HEK293 (cell line): ENCODE measurements at regions of chr11 and their contacts with region 1.

Region 1: DNA sequence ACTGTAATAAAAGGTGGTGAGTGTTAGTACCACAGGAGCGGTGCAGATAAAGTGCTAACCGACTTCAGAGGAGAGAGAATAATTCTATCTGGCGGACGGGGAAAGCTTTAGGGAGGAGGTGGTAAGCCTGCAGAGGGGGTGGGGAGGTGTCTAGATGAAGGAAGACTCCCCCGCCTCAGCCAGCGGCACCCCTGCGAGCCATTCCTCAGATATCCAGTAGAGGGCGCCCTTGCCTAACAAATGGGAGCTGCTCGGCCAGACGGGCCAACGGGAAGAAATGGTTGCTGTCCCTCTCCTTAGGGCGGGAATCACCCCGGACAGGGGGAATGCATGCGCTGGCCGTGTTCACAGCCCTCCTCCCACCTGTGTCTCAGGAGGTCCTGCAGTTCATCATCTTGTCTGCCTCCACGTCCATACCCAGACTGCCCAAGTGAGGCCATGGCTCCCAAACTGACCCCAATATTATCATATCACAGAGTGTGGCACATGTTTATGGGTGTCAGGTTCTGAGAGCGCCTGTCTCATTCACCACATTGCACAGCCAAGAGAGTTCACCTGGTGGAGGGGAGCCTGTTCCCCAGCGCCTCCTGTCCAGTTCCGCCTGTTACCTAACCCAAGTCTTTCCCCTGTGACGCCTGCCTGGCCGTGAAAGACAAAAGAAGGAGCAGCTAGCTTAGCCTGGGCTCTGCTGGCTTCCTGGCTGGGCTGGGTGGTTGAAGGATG is 85.5 kb downstream of the ST3GAL4 start:
- H3K4me3 ChIP-seq: no peak overlapping the region
- H3K27ac ChIP-seq: no peak overlapping the region
- H3K4me1 ChIP-seq: no peaks in the 10 kb centered on the region
- CTCF ChIP-seq: peak; percentile 71

Region 2: DNA sequence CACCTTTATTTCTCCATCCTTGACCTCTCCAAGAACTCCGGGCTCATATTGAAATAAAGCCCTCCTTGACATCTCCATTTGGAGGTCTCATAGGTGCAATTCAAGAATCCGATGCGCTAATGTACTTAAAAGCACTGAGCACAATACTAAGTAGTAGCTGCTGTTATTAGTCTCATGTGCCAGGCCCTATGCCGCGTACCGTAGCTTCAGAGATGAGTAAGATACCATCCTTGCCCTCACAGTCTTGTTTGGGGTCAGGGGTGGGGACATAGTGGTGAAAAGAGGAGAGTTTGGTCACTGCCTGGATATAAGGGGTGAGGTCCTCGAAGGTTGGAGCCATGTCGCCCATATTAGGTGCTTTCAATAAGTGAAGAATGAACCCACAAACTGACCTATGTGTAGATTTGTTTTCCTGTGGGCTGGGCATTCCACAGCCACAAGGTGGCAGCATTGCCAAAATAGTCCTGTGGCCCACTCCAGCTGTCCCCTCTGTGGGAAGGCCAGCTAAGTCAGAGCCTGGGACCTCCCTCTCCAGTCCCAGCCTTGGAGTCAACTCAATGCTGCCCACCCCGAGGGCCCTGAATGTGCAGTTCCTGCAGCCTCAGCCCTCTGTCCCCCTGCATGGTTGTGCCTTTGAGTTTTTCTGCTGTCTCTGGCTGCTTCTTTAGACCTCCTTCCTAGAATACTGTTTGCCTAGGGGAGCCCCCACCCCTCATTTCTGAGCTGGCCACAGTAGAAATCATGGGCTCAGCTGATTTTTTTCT is 130.5 kb before region 1 on chr11:
- CTCF ChIA-PET with region 1: interaction called, 13 read pairs
- POLR2A ChIA-PET with region 1: no interaction called
- H3K4me3 ChIP-seq: no peak overlapping the region
- H3K27ac ChIP-seq: no peak overlapping the region
- H3K4me1 ChIP-seq: no peaks in the 10 kb centered on the region
- CTCF ChIP-seq: peak; percentile 49; the same call in 1 of the 2 replicates

Region 3: GRCh38 chr11:126405906-126406305 is 35.0 kb before region 1 on chr11:
- CTCF ChIA-PET with region 1: no interaction called
- POLR2A ChIA-PET with region 1: no interaction called
- H3K4me3 ChIP-seq: no peak overlapping the region
- H3K27ac ChIP-seq: no peak overlapping the region
- H3K4me1 ChIP-seq: no peaks in the 10 kb centered on the region
- CTCF ChIP-seq: no peak

Region 4: DNA sequence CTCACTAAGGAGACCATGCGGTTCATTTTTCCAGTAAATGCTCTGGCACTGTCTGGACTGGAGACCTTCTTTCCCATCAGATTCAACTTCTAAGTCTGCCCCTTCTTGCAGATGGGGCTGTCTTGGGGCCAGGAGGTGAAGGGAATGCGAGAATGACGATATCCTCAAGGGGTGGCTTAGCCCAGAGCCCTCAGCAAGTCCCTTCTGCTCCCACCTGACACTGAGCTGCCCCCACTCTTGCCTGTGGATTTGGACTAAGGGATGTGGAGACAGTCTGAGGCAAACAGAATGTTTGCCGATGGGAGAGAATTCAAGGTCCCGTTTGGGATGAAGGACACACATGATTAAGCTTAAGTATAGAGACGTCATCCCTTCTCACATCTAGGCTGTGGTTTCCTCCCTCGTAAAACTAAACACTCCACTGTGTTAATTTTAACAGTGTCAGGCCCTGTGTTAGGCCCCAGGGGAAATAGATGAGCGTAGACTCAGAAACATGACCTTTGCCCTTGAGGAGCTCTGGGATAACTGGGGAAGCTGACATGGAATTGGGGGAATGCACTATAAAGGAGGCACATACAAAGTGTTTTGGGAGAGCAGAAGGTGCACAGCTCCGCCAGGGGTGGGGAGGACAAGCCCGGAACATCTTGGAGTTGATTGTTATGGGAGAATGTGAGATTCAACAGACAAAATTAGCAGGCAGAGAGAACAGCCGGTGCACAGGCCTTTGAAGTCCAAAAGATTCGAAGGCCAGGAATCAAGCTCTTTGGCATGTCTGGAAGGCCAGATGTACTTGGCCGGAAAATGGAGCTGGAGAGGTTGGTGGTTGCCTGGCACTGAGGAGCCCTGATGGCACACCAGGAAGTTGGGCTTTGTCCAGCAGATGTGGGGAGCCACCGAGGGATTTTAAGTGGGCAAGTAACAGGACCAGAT is 13.9 kb before region 1 on chr11:
- CTCF ChIA-PET with region 1: interaction called, 12 read pairs
- POLR2A ChIA-PET with region 1: no interaction called
- H3K4me3 ChIP-seq: no peak overlapping the region
- H3K27ac ChIP-seq: no peak overlapping the region
- H3K4me1 ChIP-seq: no peaks in the 10 kb centered on the region
- CTCF ChIP-seq: no peak